Activated CD4-positive, alpha-beta T cell treated with anti-CD3 and anti-CD28 coated beads for 36 hours (primary cell): ENCODE measurements at regions of chr1 and their contacts with region 1.

Region 1: DNA sequence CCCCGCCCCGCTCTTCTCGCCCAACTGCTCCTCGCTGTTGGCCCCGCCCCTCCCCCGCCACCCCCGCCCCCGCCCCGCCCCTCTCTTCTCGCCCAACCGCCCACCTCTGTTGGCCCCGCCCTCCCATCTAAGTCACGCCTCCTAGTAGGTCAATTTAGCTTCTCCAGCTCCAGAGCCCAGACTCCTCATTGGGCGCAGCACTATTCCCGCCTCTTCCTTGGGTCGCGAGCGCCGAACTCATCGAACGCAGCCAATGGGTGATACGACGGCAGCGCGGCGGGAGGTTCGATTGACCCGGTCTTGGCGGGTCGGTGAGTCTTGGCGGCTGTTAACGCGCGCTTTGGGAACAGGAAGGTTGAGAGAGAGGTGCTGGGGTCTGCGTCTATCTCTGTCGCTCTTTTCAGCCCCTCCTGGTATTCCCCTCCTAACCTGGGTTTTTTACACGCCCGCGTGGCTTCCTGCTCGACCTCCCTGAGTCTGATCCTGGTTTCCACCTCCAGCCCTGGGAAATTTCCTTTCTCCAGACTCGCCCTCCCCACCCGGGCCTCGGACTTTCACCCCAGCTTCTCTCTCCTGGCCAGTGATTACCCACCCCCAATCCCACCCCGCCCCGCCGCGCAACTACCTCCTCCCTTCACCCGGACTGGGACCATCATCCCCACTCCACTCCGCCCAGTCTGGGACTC is at the start of gene RAD54L:
- DNase-seq: peak; percentile 99
- ATAC-seq: peak; percentile 94
- H3K4me3 Mint-ChIP-seq: peak within 1 kb of the TSS; percentile 83
- H3K27ac Mint-ChIP-seq: peak within 1 kb of the TSS; percentile 92
- H3K4me1 Mint-ChIP-seq: peaks cover 20% of the 10 kb centered on the region
- H3K27me3 Mint-ChIP-seq: no peaks in the 10 kb centered on the region
- total RNA-seq, gene RAD54L: 64.2 to 73.4 TPM

Region 2: DNA sequence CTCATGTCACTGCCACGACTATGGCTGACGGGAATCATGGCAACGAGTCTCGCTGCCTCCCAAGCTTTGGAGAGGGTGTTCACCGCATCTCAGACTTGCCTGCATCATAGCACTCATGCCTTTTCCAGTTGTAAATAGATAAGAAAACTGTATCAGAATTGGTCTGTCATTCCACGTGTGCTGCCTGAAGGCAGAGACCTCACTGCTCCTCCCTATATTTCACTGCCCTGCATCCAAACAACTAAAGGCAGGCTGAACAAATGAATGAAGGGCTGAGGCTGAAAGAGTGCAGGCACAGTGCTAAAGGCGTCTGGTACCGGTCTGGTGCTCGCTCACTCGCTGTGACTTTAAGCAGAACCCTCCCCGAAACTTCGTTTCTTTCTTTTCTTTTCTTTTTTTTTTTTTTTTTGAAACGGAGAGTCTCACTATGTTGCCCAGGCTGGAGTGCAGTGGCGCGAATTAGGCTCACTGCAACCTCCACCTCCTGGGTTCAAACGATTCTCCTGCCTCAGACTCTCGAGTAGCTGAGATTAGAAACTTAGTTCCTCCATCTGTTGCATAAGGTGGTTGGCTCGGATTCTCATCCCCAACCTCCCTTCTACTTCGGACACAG is 1261.7 kb before region 1 on chr1:
- CTCF ChIA-PET with region 1: no interaction called
- POLR2A ChIA-PET with region 1: no interaction called
- intact Hi-C with region 1: loop called in 1 of 2 experiments (anchors 1 kb)
- DNase-seq: no peak
- ATAC-seq: no peak
- H3K4me3 Mint-ChIP-seq: peak overlapping the region; percentile 96
- H3K27ac Mint-ChIP-seq: peak overlapping the region; percentile 87
- H3K4me1 Mint-ChIP-seq: peaks cover 22% of the 10 kb centered on the region
- H3K27me3 Mint-ChIP-seq: no peaks in the 10 kb centered on the region

Region 3: GRCh38 chr1:45750298-45751038 is 497.1 kb before region 1 on chr1 and contains the start of gene IPP:
- CTCF ChIA-PET with region 1: no interaction called
- POLR2A ChIA-PET with region 1: no interaction called
- intact Hi-C with region 1: loop called in 1 of 2 experiments (anchors 1 kb)
- DNase-seq: peak; percentile 97
- ATAC-seq: peak; percentile 99
- H3K4me3 Mint-ChIP-seq: peak within 1 kb of the TSS; percentile 93
- H3K27ac Mint-ChIP-seq: peak within 1 kb of the TSS; percentile 95
- H3K4me1 Mint-ChIP-seq: peaks cover 27% of the 10 kb centered on the region
- H3K27me3 Mint-ChIP-seq: no peaks in the 10 kb centered on the region
- total RNA-seq, gene IPP: 11.6 to 21.8 TPM

Region 4: GRCh38 chr1:46184920-46185658 is 62.5 kb before region 1 on chr1:
- CTCF ChIA-PET with region 1: interaction called, 3 read pairs
- POLR2A ChIA-PET with region 1: no interaction called
- intact Hi-C with region 1: loop called in 1 of 2 experiments (anchors 1 kb)
- DNase-seq: peak; percentile 86
- ATAC-seq: peak; percentile 89
- H3K4me3 Mint-ChIP-seq: peak overlapping the region; percentile 67
- H3K27ac Mint-ChIP-seq: peak overlapping the region; percentile 97
- H3K4me1 Mint-ChIP-seq: peaks cover 24% of the 10 kb centered on the region
- H3K27me3 Mint-ChIP-seq: no peaks in the 10 kb centered on the region

Region 5: GRCh38 chr1:46303038-46303871 is 55.7 kb after region 1 on chr1 and contains the starts of genes LRRC41 and UQCRH:
- CTCF ChIA-PET with region 1: interaction called, 13 read pairs
- POLR2A ChIA-PET with region 1: interaction called, 11 read pairs
- intact Hi-C with region 1: loop called (anchors 1 kb)
- DNase-seq: peak; percentile 96
- ATAC-seq: peak; percentile 88
- H3K4me3 Mint-ChIP-seq: peak within 1 kb of the TSS; percentile 95
- H3K27ac Mint-ChIP-seq: peak within 1 kb of the TSS; percentile 95
- H3K4me1 Mint-ChIP-seq: peaks cover 44% of the 10 kb centered on the region
- H3K27me3 Mint-ChIP-seq: no peaks in the 10 kb centered on the region
- total RNA-seq, gene LRRC41: 33.4 to 34.7 TPM
- total RNA-seq, gene UQCRH: 258 to 391 TPM

Region 6: DNA sequence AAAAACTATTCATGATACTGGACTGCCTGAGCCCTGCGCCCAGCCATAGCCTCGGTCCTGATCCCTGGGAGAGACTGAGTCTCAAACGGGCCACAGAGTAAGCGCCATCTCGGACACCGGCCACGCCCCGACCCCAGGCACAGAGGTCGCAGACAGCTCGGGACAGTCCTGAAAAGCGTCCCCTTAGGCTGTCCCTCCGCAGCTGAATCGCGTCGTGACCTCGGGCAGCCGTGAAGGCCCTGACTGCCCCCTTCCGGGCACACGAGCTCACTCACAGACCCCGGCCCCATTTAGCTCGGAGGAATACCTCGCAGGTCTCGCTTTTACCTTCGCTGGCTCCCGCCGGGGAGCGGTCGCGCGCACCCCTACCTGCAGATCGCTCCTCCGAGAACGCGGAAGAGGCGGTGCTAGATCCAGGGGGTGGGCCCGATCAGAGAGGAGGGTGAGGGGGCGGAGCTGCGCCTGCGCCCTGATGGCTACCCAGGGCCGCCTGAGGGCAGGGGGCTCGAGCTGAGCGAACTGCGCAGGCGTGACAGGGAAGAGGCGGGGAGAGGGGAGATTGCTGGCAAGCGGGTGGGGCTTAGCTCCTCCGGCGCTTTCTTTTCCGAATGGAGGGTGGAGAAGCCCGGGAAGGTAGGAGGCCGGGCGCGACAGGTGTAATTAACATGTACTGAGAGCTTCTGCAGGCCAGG is 356.4 kb after region 1 on chr1 and contains the start of gene MKNK1:
- CTCF ChIA-PET with region 1: no interaction called
- POLR2A ChIA-PET with region 1: no interaction called
- intact Hi-C with region 1: loop called in 1 of 2 experiments (anchors 1 kb)
- DNase-seq: peak; percentile 99
- ATAC-seq: peak; percentile 98
- H3K4me3 Mint-ChIP-seq: peak within 1 kb of the TSS; percentile 87
- H3K27ac Mint-ChIP-seq: peak within 1 kb of the TSS; percentile 82
- H3K4me1 Mint-ChIP-seq: peaks cover 55% of the 10 kb centered on the region
- H3K27me3 Mint-ChIP-seq: no peaks in the 10 kb centered on the region
- total RNA-seq, gene MKNK1: 27.8 to 31.0 TPM